Dendritic cell treated with granulocyte-macrophage colony-stimulating factor and Interleukin-4, amounts not matched to agents 40 ng/mL and 50 ng/mL, for 4 days (primary cell): ENCODE measurements at regions of chr7 and their contacts with region 1.

Region 1: DNA sequence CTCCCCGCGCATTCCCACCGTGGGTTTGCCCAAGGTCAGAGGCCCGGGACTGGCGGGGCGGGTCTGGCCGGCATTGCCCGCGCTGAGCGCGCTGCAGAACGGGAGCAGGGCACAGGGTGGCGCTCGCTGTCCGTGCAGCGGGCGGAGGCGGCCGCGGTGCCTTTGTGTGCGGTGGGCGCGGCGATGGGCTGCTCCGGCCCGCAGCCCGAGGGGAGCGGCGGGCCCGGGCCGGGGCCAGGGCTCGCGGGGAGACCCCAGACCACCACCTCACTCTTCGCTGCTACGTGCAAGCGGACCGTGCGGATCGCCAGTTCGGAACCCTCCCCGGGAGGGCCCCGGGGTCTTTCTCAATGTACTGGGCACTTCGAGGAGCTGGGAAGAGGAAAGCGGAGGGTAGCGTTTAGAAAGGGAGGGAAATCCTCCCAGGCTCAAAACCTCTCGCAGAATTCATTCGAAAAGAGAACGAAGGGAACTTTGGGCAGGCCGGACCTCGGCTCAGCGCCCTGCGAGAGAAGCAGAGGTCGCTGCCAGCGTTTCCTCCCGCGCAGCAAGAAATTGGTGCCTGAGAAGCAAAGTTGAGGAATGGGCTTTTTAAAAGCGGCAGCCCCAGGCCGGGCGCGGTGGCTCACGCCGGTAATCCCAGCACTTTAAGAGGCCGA is 8.5 kb downstream of the SP8 start:
- H3K4me3 Mint-ChIP-seq: peak overlapping the region; percentile 61
- H3K27ac Mint-ChIP-seq: no peak overlapping the region
- H3K4me1 Mint-ChIP-seq: peaks cover 7% of the 10 kb centered on the region
- H3K27me3 Mint-ChIP-seq: peaks cover 76% of the 10 kb centered on the region

Region 2: DNA sequence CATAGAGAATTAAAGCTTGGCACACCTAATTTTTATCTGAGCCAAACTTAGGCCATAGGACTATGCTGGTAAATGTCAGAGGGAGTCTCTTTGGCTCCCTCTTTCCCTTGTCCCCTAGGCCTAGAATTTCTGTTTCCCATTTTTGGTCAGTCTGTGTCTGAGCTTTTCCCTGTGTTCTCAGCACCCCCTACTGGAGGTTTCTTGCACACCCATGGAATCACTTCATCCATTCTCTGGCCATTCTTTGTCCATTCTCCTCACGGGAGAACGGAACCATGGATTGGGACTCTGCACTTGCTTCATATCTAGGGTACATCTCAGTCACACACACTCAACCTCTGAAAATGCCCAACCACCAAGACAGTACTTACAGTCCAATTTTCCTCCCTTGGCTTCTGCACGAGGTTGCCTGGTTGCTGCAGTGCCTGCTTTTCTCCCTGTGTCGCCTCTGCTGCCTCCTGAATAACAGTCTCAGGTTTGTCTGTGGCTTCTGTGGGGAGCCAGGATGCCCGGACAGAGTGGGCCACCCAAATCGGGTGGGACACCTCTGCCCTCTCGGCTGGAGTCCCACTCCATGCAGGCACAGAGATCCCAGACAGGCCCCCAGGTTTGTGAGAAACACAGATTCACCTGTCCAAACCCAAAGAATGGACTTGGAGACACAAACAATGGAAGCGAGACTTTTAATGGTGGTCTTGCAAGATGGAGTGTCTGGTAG is 729.6 kb after region 1 on chr7:
- intact Hi-C with region 1: loop called (anchors 5 kb)
- H3K4me3 Mint-ChIP-seq: no peak overlapping the region
- H3K27ac Mint-ChIP-seq: no peak overlapping the region
- H3K4me1 Mint-ChIP-seq: no peaks in the 10 kb centered on the region
- H3K27me3 Mint-ChIP-seq: no peaks in the 10 kb centered on the region